ENCODE measurements at regions of chr1 and their contacts with region 1.

Region 1: GRCh38 chr1:214116258-214116657 is 128.5 kb downstream of the PROX1 start:
- DNase-seq: no peak
- H3K4me3 ChIP-seq: no peak overlapping the region
- H3K27ac ChIP-seq: no peak overlapping the region
- H3K4me1 ChIP-seq: no peaks in the 10 kb centered on the region
- H3K27me3 ChIP-seq: no peaks in the 10 kb centered on the region
- CTCF ChIP-seq: no peak
- EP300 ChIP-seq: no peak
- POLR2A ChIP-seq: no peak

Region 2: DNA sequence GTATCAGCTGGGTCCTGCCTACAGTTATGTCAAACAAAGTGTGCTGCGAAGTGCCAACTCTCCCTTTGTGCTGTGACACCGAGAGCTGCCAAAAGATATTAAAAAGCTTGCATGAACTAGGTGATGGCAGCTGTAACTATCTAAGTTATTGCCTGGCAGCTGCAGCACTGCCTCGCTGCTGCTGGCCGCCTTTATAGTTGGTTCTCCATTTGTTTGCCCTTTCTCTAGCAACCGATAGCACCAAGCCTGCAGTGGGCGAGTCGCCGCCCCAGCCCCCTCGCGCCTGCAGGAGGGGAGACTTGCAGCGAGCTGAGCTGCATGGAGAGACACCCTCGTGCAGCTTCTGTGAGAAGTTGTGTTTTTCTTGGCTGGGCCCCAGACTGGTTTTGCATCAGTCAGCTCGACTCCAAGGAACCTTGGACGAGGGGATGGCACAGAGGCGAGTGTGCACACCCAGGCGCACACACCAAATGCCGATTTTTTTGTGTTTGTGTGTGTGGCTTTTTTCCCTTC is 734.6 kb before region 1 on chr1:
- intact Hi-C with region 1: loop called (anchors 10 kb)
- DNase-seq: peak; percentile 35 to 47
- H3K4me3 ChIP-seq: no peak overlapping the region
- H3K27ac ChIP-seq: no peak overlapping the region
- H3K4me1 ChIP-seq: peaks cover 0 to 11% (median 0%) of the 10 kb centered on the region in 4 donors
- H3K27me3 ChIP-seq: no peaks in the 10 kb centered on the region
- CTCF ChIP-seq: no peak
- EP300 ChIP-seq: no peak
- POLR2A ChIP-seq: no peak

Region 3: GRCh38 chr1:214165850-214166374 is 49.7 kb after region 1 on chr1:
- intact Hi-C with region 1: no loop called
- DNase-seq: no peak
- H3K4me3 ChIP-seq: no peak overlapping the region
- H3K27ac ChIP-seq: no peak overlapping the region
- H3K4me1 ChIP-seq: no peaks in the 10 kb centered on the region
- H3K27me3 ChIP-seq: no peaks in the 10 kb centered on the region
- CTCF ChIP-seq: no peak
- EP300 ChIP-seq: no peak
- POLR2A ChIP-seq: no peak